ENCODE measurements at regions of chr1 and their contacts with region 1.

Region 1: DNA sequence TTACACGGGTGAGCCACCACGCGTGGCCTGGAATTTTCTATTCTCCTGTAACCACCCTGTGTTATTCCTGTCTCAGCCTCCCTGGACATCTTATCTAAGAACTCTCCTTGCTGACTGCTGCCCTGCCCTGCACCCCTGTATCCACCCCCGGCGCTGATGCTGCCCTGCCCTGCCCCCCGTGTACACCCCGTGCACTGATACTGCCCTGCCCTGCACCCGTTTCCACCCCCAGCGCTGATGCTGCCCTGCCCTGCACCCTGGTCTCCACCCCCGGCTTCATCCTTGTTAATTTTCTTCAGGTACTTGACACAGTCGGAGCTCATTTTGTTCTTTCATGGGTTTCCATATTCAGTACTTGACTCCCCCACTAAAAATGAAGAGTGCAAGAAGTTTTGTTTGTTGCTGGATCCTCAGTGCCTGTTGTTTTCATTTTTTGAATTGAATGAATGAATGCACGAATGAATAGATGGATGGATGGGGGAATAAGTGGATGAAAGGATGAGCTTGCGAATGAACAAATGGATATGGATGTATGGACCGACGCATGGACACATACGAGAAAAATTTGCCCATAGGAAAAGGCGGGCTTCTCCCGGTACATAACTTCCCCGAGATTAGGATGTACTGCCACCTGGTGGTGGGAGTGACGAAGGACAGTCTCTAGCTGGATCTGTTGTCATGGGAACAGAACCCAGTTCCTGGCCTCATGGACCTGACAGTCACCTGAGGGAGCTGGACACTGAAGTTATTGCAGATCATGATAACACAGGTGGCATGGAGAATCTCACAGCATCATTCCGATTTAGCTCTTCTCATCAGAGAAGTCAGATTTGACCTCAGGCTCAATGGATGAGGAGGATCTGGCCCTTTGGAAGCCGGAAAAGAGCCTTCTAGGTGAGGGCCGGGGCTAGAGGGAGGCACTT is 14.9 kb downstream of the AADACL4 start:
- DNase-seq: peak in 3 of 4 donors; percentile 66 to 86 (median 73)
- ATAC-seq: peak; percentile 96
- H3K4me3 ChIP-seq: no peak overlapping the region
- H3K27ac ChIP-seq: no peak overlapping the region
- H3K4me1 ChIP-seq: peaks cover 0 to 5% of the 10 kb centered on the region in 2 donors
- H3K27me3 ChIP-seq: no peaks in the 10 kb centered on the region
- CTCF ChIP-seq: peak; percentile 88 to 95

Region 2: DNA sequence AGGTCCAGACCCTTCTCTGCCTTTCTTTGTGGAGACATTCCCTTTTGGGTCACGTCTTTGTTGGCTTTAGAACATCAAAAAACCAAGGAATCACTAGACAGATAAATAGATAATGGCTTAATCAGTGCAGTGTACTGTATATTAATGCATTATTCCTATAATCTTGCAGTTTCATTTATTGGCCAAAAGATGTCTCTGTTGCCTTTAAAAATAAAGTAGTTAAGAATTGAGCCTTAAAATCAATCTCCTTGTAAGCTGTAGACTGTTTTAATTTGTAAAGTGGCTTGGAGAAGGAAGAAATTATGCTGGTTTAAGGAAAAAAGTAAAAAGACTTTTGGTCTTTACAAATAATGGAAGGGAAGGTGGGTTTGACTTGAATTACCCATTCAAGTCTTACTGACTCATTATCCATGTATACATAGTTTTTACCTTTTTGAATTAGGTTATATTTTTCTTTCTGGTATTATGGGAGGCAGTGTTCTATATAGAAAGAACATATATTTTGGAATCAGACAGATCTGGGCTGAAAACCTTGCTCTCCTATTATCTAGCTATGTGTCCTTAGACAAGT is 344.4 kb before region 1 on chr1:
- intact Hi-C with region 1: loop called in 1 of 2 experiments (anchors 5 kb)
- DNase-seq: peak in 1 of 4 donors; percentile 36
- ATAC-seq: peak; percentile 58
- H3K4me3 ChIP-seq: no peak overlapping the region
- H3K27ac ChIP-seq: no peak overlapping the region
- H3K4me1 ChIP-seq: peaks cover 0 to 10% of the 10 kb centered on the region in 2 donors
- H3K27me3 ChIP-seq: no peaks in the 10 kb centered on the region
- CTCF ChIP-seq: peak; percentile 27 to 28

Region 3: GRCh38 chr1:12692967-12693782 is 34.4 kb after region 1 on chr1:
- intact Hi-C with region 1: no loop called
- DNase-seq: peak in 2 of 4 donors; percentile 61 to 73
- ATAC-seq: peak; percentile 49
- H3K4me3 ChIP-seq: no peak overlapping the region
- H3K27ac ChIP-seq: no peak overlapping the region
- H3K4me1 ChIP-seq: no peaks in the 10 kb centered on the region
- H3K27me3 ChIP-seq: no peaks in the 10 kb centered on the region
- CTCF ChIP-seq: no peak